ENCODE measurements at regions of chr18 and their contacts with region 1.

Region 1: DNA sequence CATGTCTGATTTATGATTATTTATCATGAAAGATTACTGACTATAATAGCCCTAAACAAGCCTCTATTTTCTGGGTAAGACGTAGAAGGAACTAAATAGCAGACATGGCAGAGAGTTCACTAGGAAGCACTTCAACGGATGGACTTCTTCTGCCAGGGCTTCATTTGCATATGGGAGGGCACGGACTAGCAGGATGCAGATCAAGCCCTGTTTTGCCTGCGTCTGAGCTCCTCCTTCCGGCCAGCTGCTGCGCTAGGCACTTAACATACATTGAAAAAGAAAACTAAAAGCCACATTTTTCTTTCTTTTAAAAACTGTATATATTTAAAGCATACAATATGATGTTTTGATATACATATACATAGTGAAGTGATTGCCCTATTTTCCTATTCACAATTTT is 340.0 kb upstream of the MEX3C start:
- DNase-seq: peak in 9 of 10 donors; percentile 46 to 77 (median 63)
- H3K4me3 ChIP-seq: peak overlapping the region in 2 of 59 donors; percentile 14 to 17
- H3K27ac ChIP-seq: no peak overlapping the region
- H3K27me3 ChIP-seq: no peaks in the 10 kb centered on the region
- CTCF ChIP-seq: peak in 54 of 56 donors; percentile 24 to 84 (median 60)

Region 2: GRCh38 chr18:51110073-51110803 is 427.2 kb before region 1 on chr18:
- intact Hi-C with region 1: loop called (anchors 2 to 10 kb)
- DNase-seq: peak; percentile 46 to 84 (median 58)
- H3K4me3 ChIP-seq: peak overlapping the region in 27 of 59 donors; percentile 14 to 51 (median 37)
- H3K27ac ChIP-seq: no peak overlapping the region
- H3K27me3 ChIP-seq: no peaks in the 10 kb centered on the region
- CTCF ChIP-seq: peak in 55 of 56 donors; percentile 69 to 98 (median 93)

Region 3: GRCh38 chr18:51278045-51278649 is 259.3 kb before region 1 on chr18:
- intact Hi-C with region 1: loop called (anchors 2 to 5 kb)
- DNase-seq: peak in 9 of 10 donors; percentile 25 to 71 (median 54)
- H3K4me3 ChIP-seq: no peak overlapping the region
- H3K27ac ChIP-seq: no peak overlapping the region
- H3K27me3 ChIP-seq: no peaks in the 10 kb centered on the region
- CTCF ChIP-seq: peak in 55 of 56 donors; percentile 13 to 81 (median 65)

Region 4: GRCh38 chr18:51383116-51383515 is 154.4 kb before region 1 on chr18:
- intact Hi-C with region 1: loop called in 1 of 2 experiments (anchors 10 kb)
- DNase-seq: no peak
- H3K4me3 ChIP-seq: no peak overlapping the region
- H3K27ac ChIP-seq: no peak overlapping the region
- H3K27me3 ChIP-seq: no peaks in the 10 kb centered on the region
- CTCF ChIP-seq: peak in 3 of 56 donors; percentile 12 to 17 (median 12)

Region 5: GRCh38 chr18:51390702-51391101 is 146.8 kb before region 1 on chr18:
- intact Hi-C with region 1: loop called (anchors 10 kb)
- DNase-seq: no peak
- H3K4me3 ChIP-seq: no peak overlapping the region
- H3K27ac ChIP-seq: peak overlapping the region in 35 of 59 donors; percentile 5 to 86 (median 76)
- H3K27me3 ChIP-seq: no peaks in the 10 kb centered on the region
- CTCF ChIP-seq: no peak

Region 6: GRCh38 chr18:51463483-51464136 is 73.9 kb before region 1 on chr18:
- intact Hi-C with region 1: no loop called
- DNase-seq: no peak
- H3K4me3 ChIP-seq: no peak overlapping the region
- H3K27ac ChIP-seq: no peak overlapping the region
- H3K27me3 ChIP-seq: no peaks in the 10 kb centered on the region
- CTCF ChIP-seq: no peak

Measured in dorsolateral prefrontal cortex (tissue), 120 donors.